ENCODE measurements at regions of chr7 and their contacts with region 1.

Region 1: GRCh38 chr7:122803323-122803722 is 82.9 kb downstream of the CADPS2 start:
- DNase-seq: no peak
- ATAC-seq: peak; percentile 83
- H3K4me3 ChIP-seq: no peak overlapping the region
- H3K27ac ChIP-seq: no peak overlapping the region
- H3K4me1 ChIP-seq: no peaks in the 10 kb centered on the region
- H3K27me3 ChIP-seq: no peaks in the 10 kb centered on the region
- CTCF ChIP-seq: peak in 2 of 3 experiments; percentile 34 to 52; a peak in 3 of 6 replicates
- EP300 ChIP-seq: no peak
- POLR2A ChIP-seq: no peak
- RAD21 ChIP-seq: peak; percentile 22; the same call in 1 of the 2 replicates

Region 2: GRCh38 chr7:122550545-122550944 is 252.8 kb before region 1 on chr7:
- CTCF ChIA-PET with region 1: interaction called, 3 read pairs
- POLR2A ChIA-PET with region 1: no interaction called
- RAD21 ChIA-PET with region 1: interaction called, 4 read pairs
- SMC1A ChIA-PET with region 1: interaction called, 4 read pairs
- in situ Hi-C with region 1: no loop called
- intact Hi-C with region 1: loop called (anchors 5 kb)
- DNase-seq: no peak
- ATAC-seq: peak; percentile 68
- H3K4me3 ChIP-seq: no peak overlapping the region
- H3K27ac ChIP-seq: no peak overlapping the region
- H3K4me1 ChIP-seq: no peaks in the 10 kb centered on the region
- H3K27me3 ChIP-seq: no peaks in the 10 kb centered on the region; a peak in 1 of 4 replicates
- CTCF ChIP-seq: peak in 2 of 3 experiments; percentile 23 to 60; a peak in 2 of 6 replicates
- EP300 ChIP-seq: no peak
- POLR2A ChIP-seq: no peak
- RAD21 ChIP-seq: no peak

Region 3: GRCh38 chr7:122736183-122736582 is 67.1 kb before region 1 on chr7:
- CTCF ChIA-PET with region 1: interaction called, 3 read pairs
- POLR2A ChIA-PET with region 1: no interaction called
- RAD21 ChIA-PET with region 1: interaction called, 10 read pairs
- SMC1A ChIA-PET with region 1: interaction called, 3 read pairs
- in situ Hi-C with region 1: no loop called
- intact Hi-C with region 1: no loop called
- DNase-seq: no peak
- ATAC-seq: peak; percentile 83
- H3K4me3 ChIP-seq: no peak overlapping the region
- H3K27ac ChIP-seq: no peak overlapping the region
- H3K4me1 ChIP-seq: no peaks in the 10 kb centered on the region
- H3K27me3 ChIP-seq: no peaks in the 10 kb centered on the region
- CTCF ChIP-seq: no peak
- EP300 ChIP-seq: 0 out of 4 replicates have a peak, but pooled peaks of 1 of the 2 experiments have one; percentile 5
- POLR2A ChIP-seq: no peak
- RAD21 ChIP-seq: no peak

Region 4: GRCh38 chr7:122790132-122790531 is 13.2 kb before region 1 on chr7:
- CTCF ChIA-PET with region 1: interaction called, 28 read pairs
- POLR2A ChIA-PET with region 1: no interaction called
- RAD21 ChIA-PET with region 1: no interaction called
- SMC1A ChIA-PET with region 1: interaction called, 8 read pairs
- in situ Hi-C with region 1: no loop called
- intact Hi-C with region 1: no loop called
- DNase-seq: no peak
- ATAC-seq: no peak
- H3K4me3 ChIP-seq: no peak overlapping the region
- H3K27ac ChIP-seq: no peak overlapping the region
- H3K4me1 ChIP-seq: no peaks in the 10 kb centered on the region
- H3K27me3 ChIP-seq: no peaks in the 10 kb centered on the region
- CTCF ChIP-seq: no peak
- EP300 ChIP-seq: no peak
- POLR2A ChIP-seq: no peak
- RAD21 ChIP-seq: no peak

Region 5: GRCh38 chr7:122886357-122887081 is 83.2 kb after region 1 on chr7 and contains the start of gene CADPS2:
- CTCF ChIA-PET with region 1: interaction called, 9 read pairs
- POLR2A ChIA-PET with region 1: no interaction called
- RAD21 ChIA-PET with region 1: interaction called, 7 read pairs
- SMC1A ChIA-PET with region 1: no interaction called
- in situ Hi-C with region 1: no loop called
- intact Hi-C with region 1: loop called (anchors 5 kb)
- DNase-seq: no peak
- ATAC-seq: peak; percentile 81
- H3K4me3 ChIP-seq: peak within 1 kb of the TSS; percentile 58
- H3K27ac ChIP-seq: no peak within 1 kb of the TSS
- H3K4me1 ChIP-seq: no peaks in the 10 kb centered on the region; the same call in 1 of the 2 replicates
- H3K27me3 ChIP-seq: peaks cover 6 to 10% of the 10 kb centered on the region in 2 experiments; a peak in 3 of 4 replicates
- CTCF ChIP-seq: no peak
- EP300 ChIP-seq: no peak
- POLR2A ChIP-seq: no peak
- RAD21 ChIP-seq: no peak
- polyA plus RNA-seq, gene CADPS2: 0.16 TPM

Measured in GM12878 (cell line).